ENCODE measurements at regions of chr11 and their contacts with region 1.

Region 1: DNA sequence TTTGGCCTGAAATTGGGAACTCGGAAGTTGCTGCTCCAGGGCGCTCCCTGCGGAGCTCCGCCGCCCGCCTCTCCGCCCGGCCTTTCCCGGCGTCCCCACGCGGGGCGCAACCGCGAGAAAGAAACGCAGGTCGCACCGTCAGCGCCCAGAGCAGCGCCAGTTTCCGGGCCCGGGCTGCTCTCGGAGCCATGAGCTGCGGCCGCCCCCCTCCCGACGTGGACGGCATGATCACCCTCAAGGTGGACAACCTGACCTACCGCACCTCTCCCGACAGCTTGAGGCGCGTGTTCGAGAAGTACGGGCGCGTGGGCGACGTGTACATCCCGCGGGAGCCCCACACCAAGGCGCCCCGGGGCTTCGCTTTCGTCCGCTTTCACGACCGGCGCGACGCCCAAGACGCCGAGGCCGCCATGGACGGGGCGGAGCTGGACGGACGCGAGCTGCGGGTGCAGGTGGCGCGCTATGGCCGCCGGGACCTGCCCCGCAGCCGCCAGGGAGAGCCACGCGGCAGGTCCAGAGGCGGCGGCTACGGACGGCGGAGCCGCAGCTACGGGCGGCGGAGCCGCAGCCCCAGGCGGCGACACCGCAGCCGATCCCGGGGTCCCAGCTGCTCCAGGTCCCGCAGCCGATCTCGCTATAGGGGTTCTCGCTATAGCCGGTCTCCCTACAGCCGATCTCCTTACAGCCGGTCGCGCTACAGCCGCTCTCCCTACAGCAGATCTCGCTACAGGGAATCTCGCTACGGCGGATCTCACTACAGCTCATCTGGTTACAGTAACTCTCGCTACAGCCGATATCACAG is 521 bp downstream of the SRSF8 start:
- DNase-seq: peak; percentile 93
- H3K4me3 Mint-ChIP-seq: peak overlapping the region; percentile 98
- H3K27ac Mint-ChIP-seq: peak overlapping the region; percentile 98
- H3K4me1 Mint-ChIP-seq: peaks cover 18% of the 10 kb centered on the region
- H3K27me3 Mint-ChIP-seq: peaks cover 18% of the 10 kb centered on the region

Region 2: GRCh38 chr11:94128746-94129511 is 938.3 kb before region 1 on chr11 and contains the start of gene PANX1:
- intact Hi-C with region 1: loop called (anchors 2 kb)
- DNase-seq: peak; percentile 94
- H3K4me3 Mint-ChIP-seq: no peak within 1 kb of the TSS
- H3K27ac Mint-ChIP-seq: peak within 1 kb of the TSS; percentile 88
- H3K4me1 Mint-ChIP-seq: peaks cover 21% of the 10 kb centered on the region
- H3K27me3 Mint-ChIP-seq: no peaks in the 10 kb centered on the region
- total RNA-seq, gene PANX1: 19.7 and 20.5 TPM in 2 replicates

Region 3: GRCh38 chr11:94623120-94623735 is 444.0 kb before region 1 on chr11:
- intact Hi-C with region 1: no loop called
- DNase-seq: peak; percentile 86
- H3K4me3 Mint-ChIP-seq: no peak overlapping the region
- H3K27ac Mint-ChIP-seq: no peak overlapping the region
- H3K4me1 Mint-ChIP-seq: no peaks in the 10 kb centered on the region
- H3K27me3 Mint-ChIP-seq: peaks cover 3% of the 10 kb centered on the region

Region 4: GRCh38 chr11:94876645-94877442 is 190.4 kb before region 1 on chr11:
- intact Hi-C with region 1: loop called (anchors 5 kb)
- DNase-seq: peak; percentile 85
- H3K4me3 Mint-ChIP-seq: peak overlapping the region; percentile 51
- H3K27ac Mint-ChIP-seq: peak overlapping the region; percentile 83
- H3K4me1 Mint-ChIP-seq: peaks cover 21% of the 10 kb centered on the region
- H3K27me3 Mint-ChIP-seq: no peaks in the 10 kb centered on the region

Region 5: DNA sequence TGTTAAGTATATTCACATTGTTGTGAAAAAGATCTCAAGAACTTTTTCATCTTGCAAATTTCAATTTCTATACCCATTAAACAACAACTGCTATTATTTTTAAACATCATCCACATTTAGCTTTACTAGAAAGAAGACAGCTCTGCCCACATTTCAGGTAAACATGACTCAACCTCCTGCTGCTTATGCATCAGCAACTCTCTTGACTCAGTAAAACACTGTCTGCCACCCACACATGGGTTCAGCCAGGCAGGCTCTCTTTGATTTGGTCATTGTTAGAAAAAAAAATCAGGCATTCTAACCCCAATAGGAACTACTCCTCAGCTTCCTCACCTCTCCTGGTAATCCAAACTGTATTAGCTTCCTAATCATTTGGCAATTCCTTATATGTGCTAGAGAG is 17.3 kb after region 1 on chr11:
- intact Hi-C with region 1: loop called (anchors 1 kb)
- DNase-seq: peak; percentile 71
- H3K4me3 Mint-ChIP-seq: peak overlapping the region; percentile 18
- H3K27ac Mint-ChIP-seq: peak overlapping the region; percentile 61
- H3K4me1 Mint-ChIP-seq: peaks cover 52% of the 10 kb centered on the region
- H3K27me3 Mint-ChIP-seq: no peaks in the 10 kb centered on the region

Region 6: DNA sequence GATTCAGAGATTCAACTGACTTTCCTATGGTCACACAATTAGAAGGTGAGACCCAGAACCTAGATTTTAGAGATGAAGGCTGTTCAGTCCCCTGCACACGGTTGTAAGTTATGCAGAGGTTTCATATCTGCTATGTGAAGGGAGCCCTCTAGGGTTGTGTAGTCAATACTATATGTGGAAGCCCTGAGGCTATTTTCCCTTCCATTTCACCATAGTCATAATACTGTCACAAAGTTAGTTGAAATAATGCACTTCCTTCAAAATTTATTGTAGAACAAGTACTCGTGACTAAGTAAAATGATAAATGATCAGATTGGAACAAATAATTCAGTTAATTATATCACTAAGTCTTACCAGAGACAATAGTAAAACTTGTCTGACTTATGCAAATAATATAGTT is 71.2 kb after region 1 on chr11:
- intact Hi-C with region 1: loop called (anchors 1 kb)
- DNase-seq: peak; percentile 56
- H3K4me3 Mint-ChIP-seq: no peak overlapping the region
- H3K27ac Mint-ChIP-seq: peak overlapping the region; percentile 10
- H3K4me1 Mint-ChIP-seq: peaks cover 11% of the 10 kb centered on the region
- H3K27me3 Mint-ChIP-seq: peaks cover 5% of the 10 kb centered on the region

Region 7: DNA sequence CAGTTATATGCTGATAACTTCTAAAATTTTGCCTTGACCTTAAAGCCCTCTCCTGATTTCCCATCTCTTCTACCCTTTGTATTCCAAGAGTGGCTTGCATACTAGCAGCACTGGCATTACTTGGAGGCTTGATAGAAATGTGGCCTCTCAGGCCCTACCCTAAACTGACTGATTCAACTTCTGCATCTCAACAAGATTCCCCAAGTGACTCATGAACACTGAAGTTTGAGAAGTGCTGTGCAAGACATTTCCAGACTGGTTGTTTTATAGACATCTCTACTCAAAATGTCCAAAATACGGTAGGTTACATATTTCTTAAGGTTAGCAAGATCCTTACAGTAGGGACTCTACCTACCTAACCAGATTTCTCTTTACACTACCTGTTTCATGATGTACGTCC is 115.2 kb after region 1 on chr11:
- intact Hi-C with region 1: no loop called
- DNase-seq: no peak
- H3K4me3 Mint-ChIP-seq: no peak overlapping the region
- H3K27ac Mint-ChIP-seq: peak overlapping the region; percentile 66
- H3K4me1 Mint-ChIP-seq: peaks cover 5% of the 10 kb centered on the region
- H3K27me3 Mint-ChIP-seq: no peaks in the 10 kb centered on the region

Region 8: GRCh38 chr11:95699631-95700470 is 632.6 kb after region 1 on chr11:
- intact Hi-C with region 1: loop called (anchors 5 kb)
- DNase-seq: no peak
- H3K4me3 Mint-ChIP-seq: peak overlapping the region; percentile 79
- H3K27ac Mint-ChIP-seq: peak overlapping the region; percentile 98
- H3K4me1 Mint-ChIP-seq: peaks cover 55% of the 10 kb centered on the region
- H3K27me3 Mint-ChIP-seq: no peaks in the 10 kb centered on the region

Region 9: GRCh38 chr11:95790123-95790932 is 723.1 kb after region 1 on chr11 and contains the start of gene CEP57:
- intact Hi-C with region 1: loop called (anchors 1 kb)
- DNase-seq: peak; percentile 98
- H3K4me3 Mint-ChIP-seq: peak within 1 kb of the TSS; percentile 98
- H3K27ac Mint-ChIP-seq: peak within 1 kb of the TSS; percentile 100
- H3K4me1 Mint-ChIP-seq: peaks cover 45% of the 10 kb centered on the region
- H3K27me3 Mint-ChIP-seq: no peaks in the 10 kb centered on the region
- total RNA-seq, gene CEP57: 75.7 and 87.6 TPM in 2 replicates